ENCODE measurements at regions of chr11 and their contacts with region 1.

Region 1: GRCh38 chr11:95231127-95231880 is at the start of gene SESN3:
- DNase-seq: peak; percentile 99
- H3K4me3 Mint-ChIP-seq: peak within 1 kb of the TSS; percentile 92
- H3K27ac Mint-ChIP-seq: peak within 1 kb of the TSS; percentile 77
- H3K4me1 Mint-ChIP-seq: peaks cover 38% of the 10 kb centered on the region
- H3K27me3 Mint-ChIP-seq: peaks cover 4% of the 10 kb centered on the region
- total RNA-seq, gene SESN3: 73.2 and 74.9 TPM in 2 replicates

Region 2: GRCh38 chr11:94973099-94973968 is 258.0 kb before region 1 on chr11 and contains the starts of genes CWC15 and KDM4D:
- intact Hi-C with region 1: loop called (anchors 10 kb)
- DNase-seq: peak; percentile 91
- H3K4me3 Mint-ChIP-seq: peak within 1 kb of the TSS; percentile 95
- H3K27ac Mint-ChIP-seq: peak within 1 kb of the TSS; percentile 91
- H3K4me1 Mint-ChIP-seq: peaks cover 28% of the 10 kb centered on the region
- H3K27me3 Mint-ChIP-seq: no peaks in the 10 kb centered on the region
- total RNA-seq, gene CWC15: 86.1 and 94.4 TPM in 2 replicates
- total RNA-seq, gene KDM4D: 0.48 and 0.84 TPM in 2 replicates

Region 3: GRCh38 chr11:95089620-95090542 is 141.4 kb before region 1 on chr11 and contains the start of gene ENDOD1:
- intact Hi-C with region 1: loop called (anchors 5 kb)
- DNase-seq: peak; percentile 85
- H3K4me3 Mint-ChIP-seq: peak within 1 kb of the TSS; percentile 88
- H3K27ac Mint-ChIP-seq: peak within 1 kb of the TSS; percentile 95
- H3K4me1 Mint-ChIP-seq: peaks cover 66% of the 10 kb centered on the region
- H3K27me3 Mint-ChIP-seq: no peaks in the 10 kb centered on the region
- total RNA-seq, gene ENDOD1: 33.7 and 34.9 TPM in 2 replicates

Region 4: DNA sequence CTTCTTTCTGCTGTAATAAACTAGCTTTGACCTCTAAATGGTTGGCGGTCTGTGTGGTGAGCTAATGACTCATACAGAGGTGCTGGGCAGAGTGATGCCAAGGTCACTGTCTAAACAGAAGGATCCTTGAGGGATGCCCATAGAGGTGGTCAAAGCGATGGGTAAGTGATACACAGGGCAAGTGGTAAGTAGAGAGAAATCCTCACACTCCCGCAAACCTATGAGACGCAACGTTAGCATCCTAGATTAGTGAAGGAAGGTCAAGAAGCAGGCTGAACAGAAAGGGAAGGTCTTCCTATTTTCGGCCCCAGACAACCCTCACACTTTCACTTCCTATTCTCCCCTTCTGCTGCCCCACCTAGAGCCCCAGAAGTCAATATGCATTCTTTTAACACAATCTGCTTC is 65.3 kb after region 1 on chr11:
- intact Hi-C with region 1: loop called (anchors 2 kb)
- DNase-seq: no peak
- H3K4me3 Mint-ChIP-seq: no peak overlapping the region
- H3K27ac Mint-ChIP-seq: no peak overlapping the region
- H3K4me1 Mint-ChIP-seq: peaks cover 23% of the 10 kb centered on the region
- H3K27me3 Mint-ChIP-seq: peaks cover under 1% of the 10 kb centered on the region

Region 5: GRCh38 chr11:95412074-95412473 is 180.8 kb after region 1 on chr11:
- intact Hi-C with region 1: no loop called
- DNase-seq: no peak
- H3K4me3 Mint-ChIP-seq: no peak overlapping the region
- H3K27ac Mint-ChIP-seq: no peak overlapping the region
- H3K4me1 Mint-ChIP-seq: peaks cover 12% of the 10 kb centered on the region
- H3K27me3 Mint-ChIP-seq: no peaks in the 10 kb centered on the region

Region 6: DNA sequence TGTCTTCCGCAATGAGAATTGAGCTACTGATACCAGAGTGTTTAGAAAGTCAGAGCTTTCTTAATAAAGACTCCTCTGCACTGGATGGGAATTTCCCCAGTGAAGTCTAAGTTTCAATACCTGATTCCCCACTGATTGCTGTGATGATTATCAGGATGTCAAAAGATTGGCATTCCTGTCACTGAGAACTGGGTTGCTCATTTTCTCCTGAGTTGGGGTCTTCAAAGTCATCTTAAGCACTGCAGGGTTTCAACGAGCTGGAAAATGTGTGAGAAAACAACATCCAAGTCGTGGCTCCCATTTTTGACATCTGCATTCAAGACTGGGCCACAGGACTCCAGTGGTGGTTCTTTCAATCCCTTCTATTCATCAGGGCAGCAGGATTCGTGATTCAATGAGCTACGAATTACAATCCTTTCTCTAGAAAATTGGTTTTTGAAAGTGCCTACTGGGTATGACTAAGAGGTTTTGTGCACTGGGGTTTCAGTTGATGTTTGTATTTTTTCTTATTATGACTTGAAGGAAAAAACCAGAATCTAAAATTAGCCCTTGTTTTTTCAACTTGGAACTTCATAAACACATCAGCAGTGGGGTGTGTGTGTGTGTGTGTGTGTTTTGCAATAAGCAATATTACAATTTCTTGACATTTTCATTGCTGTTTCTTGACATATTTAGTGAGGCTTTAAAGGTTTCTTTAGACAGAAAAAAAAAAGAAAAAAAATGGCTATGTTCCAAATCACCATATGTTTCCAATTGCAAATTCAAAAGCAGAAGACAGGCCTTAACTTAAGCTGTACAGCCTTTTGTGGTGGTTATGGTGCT is 325.2 kb after region 1 on chr11:
- intact Hi-C with region 1: loop called (anchors 2 kb)
- DNase-seq: no peak
- H3K4me3 Mint-ChIP-seq: no peak overlapping the region
- H3K27ac Mint-ChIP-seq: peak overlapping the region; percentile 91
- H3K4me1 Mint-ChIP-seq: peaks cover 37% of the 10 kb centered on the region
- H3K27me3 Mint-ChIP-seq: no peaks in the 10 kb centered on the region

Region 7: GRCh38 chr11:95764267-95764898 is 533.1 kb after region 1 on chr11:
- intact Hi-C with region 1: loop called (anchors 5 kb)
- DNase-seq: no peak
- H3K4me3 Mint-ChIP-seq: no peak overlapping the region
- H3K27ac Mint-ChIP-seq: no peak overlapping the region
- H3K4me1 Mint-ChIP-seq: peaks cover 15% of the 10 kb centered on the region
- H3K27me3 Mint-ChIP-seq: no peaks in the 10 kb centered on the region